ENCODE measurements at regions of chr12 and their contacts with region 1.

Region 1: DNA sequence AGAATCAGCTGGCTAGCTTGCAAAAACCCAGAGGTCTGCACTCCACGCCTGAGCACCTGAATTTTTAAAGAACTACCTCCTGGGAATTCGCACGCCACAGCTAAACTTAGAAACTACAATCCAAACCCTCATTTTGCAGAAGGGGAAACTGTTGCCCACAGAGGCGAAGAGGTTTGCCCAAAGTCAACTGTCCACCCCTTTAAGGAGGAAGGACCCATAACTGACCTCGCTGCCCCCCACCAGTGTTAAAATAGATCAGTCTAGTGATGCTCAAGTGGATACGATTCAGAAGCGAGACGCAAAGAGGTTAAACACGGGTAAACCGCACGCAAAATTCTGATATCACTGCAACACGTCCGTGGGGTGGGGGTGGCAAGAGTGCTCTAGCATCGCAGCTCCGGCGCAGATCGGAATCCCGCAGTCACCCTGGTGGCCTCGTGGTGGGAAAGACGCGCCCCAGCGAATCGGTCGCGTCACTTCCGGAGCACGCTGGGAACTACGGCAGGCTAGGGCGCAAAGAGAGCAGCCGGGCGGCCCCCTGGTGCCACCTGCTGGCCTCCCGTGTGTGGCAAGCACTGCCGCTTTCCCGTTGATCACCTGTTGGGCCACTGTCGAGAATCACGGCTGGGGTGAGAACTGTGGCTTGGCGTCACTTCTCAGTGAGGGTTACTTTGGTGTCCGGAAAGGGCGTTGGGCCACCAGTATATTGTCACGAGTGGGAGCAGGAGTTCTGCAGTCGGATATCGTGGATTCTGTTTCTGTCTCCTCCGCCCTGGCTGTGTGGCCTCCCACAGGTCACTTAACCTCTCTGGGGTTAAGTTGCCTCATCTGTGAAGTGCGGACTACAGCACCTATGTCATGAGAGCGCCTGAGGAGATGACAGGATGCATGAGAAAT is at the start of gene ALKBH2:
- DNase-seq: peak; percentile 85
- ATAC-seq: peak; percentile 57
- H3K4me3 ChIP-seq: peak within 1 kb of the TSS; percentile 25 to 66 (median 37)
- H3K27ac ChIP-seq: peak within 1 kb of the TSS; percentile 52
- H3K4me1 ChIP-seq: peaks cover 59% of the 10 kb centered on the region
- H3K27me3 ChIP-seq: no peaks in the 10 kb centered on the region
- CTCF ChIP-seq: peak; percentile 100
- EP300 ChIP-seq: no peak; a peak in 1 of 4 replicates
- POLR2A ChIP-seq: peak; percentile 86 to 92
- RAD21 ChIP-seq: peak; percentile 100
- total RNA-seq, gene ALKBH2: 40.5 and 46.7 TPM in 2 replicates

Region 2: GRCh38 chr12:108884116-108885012 is 208.9 kb before region 1 on chr12:
- CTCF ChIA-PET with region 1: interaction called, 7 read pairs
- POLR2A ChIA-PET with region 1: no interaction called
- in situ Hi-C with region 1: loop called (anchors 10 kb)
- intact Hi-C with region 1: loop called (anchors 5 kb)
- DNase-seq: peak; percentile 14
- ATAC-seq: no peak
- H3K4me3 ChIP-seq: no peak overlapping the region
- H3K27ac ChIP-seq: no peak overlapping the region
- H3K4me1 ChIP-seq: peaks cover 12% of the 10 kb centered on the region
- H3K27me3 ChIP-seq: no peaks in the 10 kb centered on the region
- CTCF ChIP-seq: peak; percentile 66
- EP300 ChIP-seq: no peak
- POLR2A ChIP-seq: no peak
- RAD21 ChIP-seq: peak; percentile 45

Region 3: GRCh38 chr12:109052414-109053323 is 40.6 kb before region 1 on chr12 and contains the start of gene USP30:
- CTCF ChIA-PET with region 1: no interaction called
- POLR2A ChIA-PET with region 1: interaction called, 3 read pairs
- in situ Hi-C with region 1: no loop called
- intact Hi-C with region 1: loop called (anchors 5 kb)
- DNase-seq: peak; percentile 65
- ATAC-seq: peak; percentile 90
- H3K4me3 ChIP-seq: peak within 1 kb of the TSS; percentile 77 to 97 (median 92)
- H3K27ac ChIP-seq: peak within 1 kb of the TSS; percentile 85
- H3K4me1 ChIP-seq: peaks cover 12% of the 10 kb centered on the region
- H3K27me3 ChIP-seq: no peaks in the 10 kb centered on the region; a peak in 1 of 5 replicates
- CTCF ChIP-seq: 0 out of 2 replicates have a peak, but pooled peaks have one; percentile 30
- EP300 ChIP-seq: peak; percentile 51 to 61; a peak in 1 of 4 replicates
- POLR2A ChIP-seq: no peak
- RAD21 ChIP-seq: peak; percentile 66
- total RNA-seq, gene USP30: 9.2 and 11.2 TPM in 2 replicates

Measured in HepG2 (cell line).